ENCODE measurements at regions of chr14 and their contacts with region 1.

Region 1: GRCh38 chr14:24232121-24232644 is at the start of gene NEDD8:
- DNase-seq: peak; percentile 98
- H3K4me3 Mint-ChIP-seq: peak within 1 kb of the TSS; percentile 77
- H3K27ac Mint-ChIP-seq: peak within 1 kb of the TSS; percentile 70
- H3K4me1 Mint-ChIP-seq: peaks cover 24% of the 10 kb centered on the region
- H3K27me3 Mint-ChIP-seq: no peaks in the 10 kb centered on the region
- CTCF ChIP-seq: no peak
- total RNA-seq, gene NEDD8: 233 and 243 TPM in 2 replicates

Region 2: GRCh38 chr14:22332686-22333421 is 1899.3 kb before region 1 on chr14:
- CTCF ChIA-PET with region 1: no interaction called
- POLR2A ChIA-PET with region 1: no interaction called
- intact Hi-C with region 1: no loop called
- DNase-seq: no peak
- H3K4me3 Mint-ChIP-seq: no peak overlapping the region
- H3K27ac Mint-ChIP-seq: no peak overlapping the region
- H3K4me1 Mint-ChIP-seq: no peaks in the 10 kb centered on the region
- H3K27me3 Mint-ChIP-seq: no peaks in the 10 kb centered on the region
- CTCF ChIP-seq: no peak

Region 3: DNA sequence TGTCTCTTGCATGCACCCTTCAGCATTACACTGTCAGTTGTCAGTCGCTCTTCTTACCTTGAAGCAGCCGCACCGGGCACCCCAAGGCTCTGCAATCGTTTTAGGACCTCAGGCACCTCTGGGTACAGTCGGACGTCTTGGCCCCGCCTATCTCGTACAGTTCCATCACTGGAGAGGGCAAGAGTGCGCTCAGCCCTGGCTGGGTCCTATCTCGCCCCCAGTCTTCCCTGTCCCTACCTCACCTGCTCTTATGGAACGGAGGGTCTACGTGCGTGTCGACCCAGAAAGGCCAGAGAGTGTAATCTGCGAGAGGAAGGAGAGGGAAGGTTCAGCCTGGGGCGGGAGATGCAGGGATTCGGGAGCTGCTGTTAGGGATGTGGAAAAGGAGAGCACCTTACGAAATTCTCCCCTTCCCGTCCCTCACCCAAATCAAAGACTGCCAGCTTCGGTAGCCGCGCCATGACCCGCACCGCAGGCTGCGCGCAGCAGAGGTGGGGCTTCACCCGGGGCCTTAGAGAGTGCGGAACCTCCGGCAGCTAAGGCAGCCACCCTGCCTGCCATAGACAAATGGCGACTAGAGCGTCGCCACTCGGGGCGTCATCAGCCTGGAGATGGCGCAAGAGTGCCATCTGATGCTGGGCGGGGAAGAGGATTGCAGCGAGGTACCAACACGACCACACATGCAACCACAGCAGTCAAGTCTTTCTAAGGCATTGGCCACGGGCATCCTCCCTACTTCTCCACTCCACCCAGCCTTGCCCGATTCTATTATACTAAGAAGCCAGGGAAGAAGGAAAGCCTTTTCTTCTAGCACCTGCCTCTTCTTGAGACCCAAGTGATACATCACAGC is 16.5 kb before region 1 on chr14 and contains the start of gene MDP1:
- CTCF ChIA-PET with region 1: interaction called, 5 read pairs
- POLR2A ChIA-PET with region 1: interaction called, 14 read pairs
- intact Hi-C with region 1: loop called (anchors 1 kb)
- DNase-seq: peak; percentile 87
- H3K4me3 Mint-ChIP-seq: peak within 1 kb of the TSS; percentile 80
- H3K27ac Mint-ChIP-seq: peak within 1 kb of the TSS; percentile 73
- H3K4me1 Mint-ChIP-seq: peaks cover 20% of the 10 kb centered on the region
- H3K27me3 Mint-ChIP-seq: no peaks in the 10 kb centered on the region
- CTCF ChIP-seq: peak; percentile 25
- total RNA-seq, gene MDP1: 11.0 and 20.2 TPM in 2 replicates

Measured in MCF 10A (cell line).